HepG2 (cell line): ENCODE measurements at regions of chr5 and their contacts with region 1.

Region 1: DNA sequence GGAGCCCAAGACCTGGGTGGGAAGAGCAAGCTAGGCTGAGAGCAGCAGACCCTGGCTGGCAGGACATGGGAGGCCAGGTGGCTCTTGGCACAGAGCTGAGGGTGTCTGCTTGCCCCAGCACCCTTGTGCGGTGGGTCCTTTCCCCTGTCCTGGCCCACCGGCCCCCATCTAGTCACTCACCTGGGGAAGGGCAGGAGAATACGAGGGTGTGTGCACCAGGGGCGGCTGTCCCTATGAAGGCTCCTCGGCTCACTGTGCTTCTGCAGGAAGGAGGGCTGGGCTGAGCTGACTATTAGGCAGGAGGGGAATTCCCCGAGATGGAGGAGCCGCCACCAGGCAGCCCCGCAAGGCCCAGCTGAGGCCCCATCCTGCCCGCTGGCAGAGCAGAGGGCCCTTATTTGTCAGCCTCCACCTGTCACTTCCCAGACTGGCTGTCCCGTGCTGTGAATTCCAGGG is 6.1 kb upstream of the TNIP1 start:
- DNase-seq: no peak
- ATAC-seq: peak; percentile 50
- H3K4me3 ChIP-seq: peak overlapping the region in 2 of 3 experiments; percentile 3 to 35; a peak in 2 of 6 replicates
- H3K27ac ChIP-seq: no peak overlapping the region
- H3K4me1 ChIP-seq: peaks cover 48% of the 10 kb centered on the region
- H3K27me3 ChIP-seq: peaks cover 2 to 10% of the 10 kb centered on the region in 2 experiments; a peak in 2 of 5 replicates
- CTCF ChIP-seq: no peak
- EP300 ChIP-seq: no peak
- POLR2A ChIP-seq: no peak
- RAD21 ChIP-seq: no peak

Region 2: GRCh38 chr5:151051066-151051930 is 35.6 kb before region 1 on chr5:
- CTCF ChIA-PET with region 1: no interaction called
- POLR2A ChIA-PET with region 1: no interaction called
- in situ Hi-C with region 1: no loop called
- intact Hi-C with region 1: loop called (anchors 5 kb)
- DNase-seq: peak; percentile 68
- ATAC-seq: peak; percentile 91
- H3K4me3 ChIP-seq: no peak overlapping the region
- H3K27ac ChIP-seq: no peak overlapping the region
- H3K4me1 ChIP-seq: no peaks in the 10 kb centered on the region
- H3K27me3 ChIP-seq: no peaks in the 10 kb centered on the region
- CTCF ChIP-seq: peak; percentile 88
- EP300 ChIP-seq: no peak
- POLR2A ChIP-seq: no peak
- RAD21 ChIP-seq: peak; percentile 83